ENCODE measurements at regions of chr22 and their contacts with region 1.

Region 1: GRCh38 chr22:31977141-31977841 is 33.0 kb downstream of the YWHAH start:
- DNase-seq: peak; percentile 76
- H3K4me3 ChIP-seq: no peak overlapping the region
- H3K27ac ChIP-seq: no peak overlapping the region
- H3K4me1 ChIP-seq: peaks cover 10% of the 10 kb centered on the region
- CTCF ChIP-seq: peak; percentile 91

Region 2: DNA sequence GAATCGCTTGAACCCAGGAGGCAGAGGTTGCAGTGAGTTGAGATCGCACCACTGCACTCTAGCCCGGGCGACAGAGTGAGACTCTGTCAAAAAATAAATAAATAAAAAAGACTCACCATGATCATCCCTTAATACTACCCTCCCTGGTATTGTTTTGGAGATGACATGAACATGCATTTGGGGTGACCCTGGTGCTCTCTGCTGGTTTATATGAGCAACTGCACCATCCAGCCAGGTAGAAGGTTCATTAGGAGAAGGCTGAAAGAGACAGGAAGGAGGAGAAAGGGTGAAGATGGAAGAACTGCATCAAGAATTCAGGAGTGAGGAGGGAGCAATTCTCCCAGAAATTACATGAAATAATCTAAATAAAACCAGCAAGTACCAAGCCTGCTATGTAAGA is 103.6 kb after region 1 on chr22:
- CTCF ChIA-PET with region 1: no interaction called
- POLR2A ChIA-PET with region 1: no interaction called
- intact Hi-C with region 1: loop called (anchors 1 kb)
- DNase-seq: peak; percentile 49
- H3K4me3 ChIP-seq: no peak overlapping the region
- H3K27ac ChIP-seq: no peak overlapping the region
- H3K4me1 ChIP-seq: no peaks in the 10 kb centered on the region
- CTCF ChIP-seq: peak; percentile 78

Region 3: GRCh38 chr22:32265882-32266767 is 288.8 kb after region 1 on chr22:
- CTCF ChIA-PET with region 1: interaction called, 3 read pairs
- POLR2A ChIA-PET with region 1: no interaction called
- intact Hi-C with region 1: loop called (anchors 2 kb)
- DNase-seq: peak; percentile 60
- H3K4me3 ChIP-seq: no peak overlapping the region
- H3K27ac ChIP-seq: no peak overlapping the region
- H3K4me1 ChIP-seq: no peaks in the 10 kb centered on the region
- CTCF ChIP-seq: peak; percentile 97

Measured in OCI-LY7 (cell line).